K562 (cell line): ENCODE measurements at regions of chr12 and their contacts with region 1.

Region 1: GRCh38 chr12:105100998-105101397 is 6.5 kb upstream of the WASHC4 start:
- DNase-seq: no peak
- ATAC-seq: no peak
- H3K4me3 ChIP-seq: no peak overlapping the region
- H3K27ac ChIP-seq: no peak overlapping the region
- H3K4me1 ChIP-seq: no peaks in the 10 kb centered on the region
- H3K27me3 ChIP-seq: no peaks in the 10 kb centered on the region
- CTCF ChIP-seq: peak in 1 of 3 experiments; percentile 36; a peak in 2 of 6 replicates
- EP300 ChIP-seq: no peak
- POLR2A ChIP-seq: no peak
- RAD21 ChIP-seq: peak; percentile 32 to 49; a peak in 2 of 4 replicates

Region 2: GRCh38 chr12:104733717-104734175 is 367.3 kb before region 1 on chr12:
- CTCF ChIA-PET with region 1: no interaction called
- POLR2A ChIA-PET with region 1: no interaction called
- in situ Hi-C with region 1: no loop called
- intact Hi-C with region 1: loop called (anchors 5 kb)
- DNase-seq: peak; percentile 29 to 46 (median 36)
- ATAC-seq: peak; percentile 59
- H3K4me3 ChIP-seq: no peak overlapping the region
- H3K27ac ChIP-seq: no peak overlapping the region
- H3K4me1 ChIP-seq: peaks cover under 1 to 5% of the 10 kb centered on the region in 2 experiments; a peak in 4 of 5 replicates
- H3K27me3 ChIP-seq: no peaks in the 10 kb centered on the region
- CTCF ChIP-seq: peak in 2 of 3 experiments; percentile 45 to 50; a peak in 2 of 6 replicates
- EP300 ChIP-seq: no peak
- POLR2A ChIP-seq: no peak
- RAD21 ChIP-seq: peak; percentile 35 to 62

Region 3: DNA sequence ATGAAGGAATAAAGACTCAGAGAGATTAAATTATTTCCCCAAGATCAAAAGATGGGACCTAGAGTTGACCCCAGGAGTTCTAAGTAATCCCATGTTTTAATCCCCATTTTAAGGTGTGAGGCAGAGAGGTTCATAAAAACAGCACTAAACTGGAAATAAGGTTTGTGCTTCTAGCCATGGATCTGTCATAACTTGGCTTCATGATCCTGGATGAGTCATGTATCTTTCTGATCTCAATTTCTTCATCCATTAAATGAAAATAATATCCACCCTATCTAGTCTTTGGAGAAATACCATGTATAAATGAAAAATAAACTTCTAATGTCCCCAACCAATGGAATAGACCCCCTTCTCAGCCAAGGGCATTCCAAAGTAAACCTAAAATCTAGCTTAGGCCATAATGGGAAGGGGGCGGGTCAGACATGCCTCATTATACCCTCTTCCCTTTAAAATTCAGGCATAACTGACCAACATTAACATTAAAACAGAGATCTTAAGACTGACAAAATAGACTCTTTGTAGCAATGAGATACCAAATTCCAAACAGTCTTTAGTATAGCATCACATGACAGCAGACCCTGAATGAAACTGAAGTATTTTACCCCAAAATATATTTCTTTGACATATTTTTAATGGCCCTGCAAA is 190.7 kb before region 1 on chr12:
- CTCF ChIA-PET with region 1: no interaction called
- POLR2A ChIA-PET with region 1: no interaction called
- in situ Hi-C with region 1: no loop called
- intact Hi-C with region 1: no loop called
- DNase-seq: no peak
- ATAC-seq: no peak
- H3K4me3 ChIP-seq: no peak overlapping the region
- H3K27ac ChIP-seq: no peak overlapping the region
- H3K4me1 ChIP-seq: no peaks in the 10 kb centered on the region; a peak in 1 of 5 replicates
- H3K27me3 ChIP-seq: peaks cover 10 to 11% of the 10 kb centered on the region in 2 experiments; a peak in 3 of 5 replicates
- CTCF ChIP-seq: no peak
- EP300 ChIP-seq: no peak
- POLR2A ChIP-seq: no peak
- RAD21 ChIP-seq: no peak

Region 4: GRCh38 chr12:104986022-104986941 is 114.7 kb before region 1 on chr12 and contains the start of gene NOPCHAP1:
- CTCF ChIA-PET with region 1: no interaction called
- POLR2A ChIA-PET with region 1: no interaction called
- in situ Hi-C with region 1: no loop called
- intact Hi-C with region 1: loop called (anchors 5 kb)
- DNase-seq: peak; percentile 93 to 95 (median 94)
- ATAC-seq: peak; percentile 100
- H3K4me3 ChIP-seq: peak within 1 kb of the TSS; percentile 86
- H3K27ac ChIP-seq: peak within 1 kb of the TSS; percentile 70
- H3K4me1 ChIP-seq: peaks cover 0 to 10% of the 10 kb centered on the region in 2 experiments; a peak in 2 of 5 replicates
- H3K27me3 ChIP-seq: no peaks in the 10 kb centered on the region
- CTCF ChIP-seq: no peak
- EP300 ChIP-seq: no peak
- POLR2A ChIP-seq: peak; percentile 91
- RAD21 ChIP-seq: no peak
- polyA plus RNA-seq, gene NOPCHAP1: 98.7 to 108 TPM

Region 5: GRCh38 chr12:105120551-105120950 is 19.6 kb after region 1 on chr12:
- CTCF ChIA-PET with region 1: no interaction called
- POLR2A ChIA-PET with region 1: no interaction called
- in situ Hi-C with region 1: no loop called
- intact Hi-C with region 1: no loop called
- DNase-seq: peak in 3 of 4 experiments; percentile 11 to 15 (median 13)
- ATAC-seq: peak; percentile 68
- H3K4me3 ChIP-seq: no peak overlapping the region
- H3K27ac ChIP-seq: no peak overlapping the region
- H3K4me1 ChIP-seq: no peaks in the 10 kb centered on the region
- H3K27me3 ChIP-seq: no peaks in the 10 kb centered on the region
- CTCF ChIP-seq: no peak
- EP300 ChIP-seq: no peak
- POLR2A ChIP-seq: no peak
- RAD21 ChIP-seq: no peak